CD8-positive, alpha-beta T cell (primary cell): ENCODE measurements at regions of chr1 and their contacts with region 1.

Region 1: DNA sequence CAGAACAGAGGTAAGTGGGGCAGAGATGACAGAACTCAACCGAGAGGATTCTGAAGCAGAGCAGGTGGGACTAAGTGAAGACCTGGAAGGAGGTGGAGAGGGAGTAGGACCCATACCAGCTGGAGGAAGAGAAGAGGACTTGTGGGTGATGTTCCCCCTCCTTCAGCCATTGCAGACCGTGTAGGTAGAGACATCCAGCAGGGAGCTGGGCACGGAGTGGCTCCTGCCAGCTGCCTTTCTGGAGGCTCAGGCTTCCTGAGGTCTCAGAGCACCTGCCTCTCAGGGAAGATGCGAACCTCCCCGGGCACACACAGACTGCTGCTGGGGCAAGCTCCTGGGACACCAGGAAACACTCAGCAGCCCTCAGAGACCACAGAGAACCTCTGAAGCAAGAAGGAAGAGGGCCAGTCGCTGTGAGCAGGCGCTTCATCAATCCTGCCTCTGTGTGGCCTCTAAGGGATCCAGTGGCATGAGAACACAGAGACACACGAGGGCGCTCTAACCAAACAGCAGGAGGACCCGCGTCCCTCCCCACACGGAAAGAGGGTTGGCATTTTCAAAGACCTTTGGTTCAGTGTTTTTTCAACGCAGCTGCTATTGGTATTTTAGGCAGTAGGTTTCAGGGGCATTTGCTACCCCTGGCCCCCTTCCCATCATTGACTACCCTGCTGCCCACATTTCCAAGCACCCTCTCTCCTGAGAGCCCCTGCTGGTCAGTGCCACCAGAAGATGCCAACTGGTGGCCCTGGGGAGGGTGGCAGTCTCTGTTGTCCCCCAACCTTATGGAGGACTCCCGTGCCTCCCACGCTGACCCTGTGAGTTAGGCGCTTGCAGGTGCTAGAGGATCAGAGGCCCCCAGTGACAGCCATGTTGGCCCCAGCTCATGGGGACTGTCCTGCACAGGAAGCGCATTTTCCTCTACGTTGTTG is 89.6 kb upstream of the EDN2 start:
- DNase-seq: peak; percentile 64 to 88 (median 81)
- ATAC-seq: peak; percentile 97
- H3K4me3 ChIP-seq: no peak overlapping the region
- H3K4me3 Mint-ChIP-seq: no peak overlapping the region
- H3K27ac ChIP-seq: no peak overlapping the region
- H3K27ac Mint-ChIP-seq: no peak overlapping the region
- H3K4me1 ChIP-seq: peaks cover 9% of the 10 kb centered on the region
- H3K4me1 Mint-ChIP-seq: peaks cover 8% of the 10 kb centered on the region
- H3K27me3 ChIP-seq: no peaks in the 10 kb centered on the region
- H3K27me3 Mint-ChIP-seq: no peaks in the 10 kb centered on the region
- CTCF ChIP-seq: peak; percentile 85

Region 2: GRCh38 chr1:41529621-41530395 is 44.2 kb before region 1 on chr1:
- CTCF ChIA-PET with region 1: no interaction called
- POLR2A ChIA-PET with region 1: no interaction called
- intact Hi-C with region 1: no loop called
- DNase-seq: no peak
- ATAC-seq: no peak
- H3K4me3 ChIP-seq: no peak overlapping the region
- H3K4me3 Mint-ChIP-seq: no peak overlapping the region
- H3K27ac ChIP-seq: no peak overlapping the region
- H3K27ac Mint-ChIP-seq: peak overlapping the region; percentile 71
- H3K4me1 ChIP-seq: no peaks in the 10 kb centered on the region
- H3K4me1 Mint-ChIP-seq: no peaks in the 10 kb centered on the region
- H3K27me3 ChIP-seq: no peaks in the 10 kb centered on the region
- H3K27me3 Mint-ChIP-seq: no peaks in the 10 kb centered on the region
- CTCF ChIP-seq: no peak

Region 3: DNA sequence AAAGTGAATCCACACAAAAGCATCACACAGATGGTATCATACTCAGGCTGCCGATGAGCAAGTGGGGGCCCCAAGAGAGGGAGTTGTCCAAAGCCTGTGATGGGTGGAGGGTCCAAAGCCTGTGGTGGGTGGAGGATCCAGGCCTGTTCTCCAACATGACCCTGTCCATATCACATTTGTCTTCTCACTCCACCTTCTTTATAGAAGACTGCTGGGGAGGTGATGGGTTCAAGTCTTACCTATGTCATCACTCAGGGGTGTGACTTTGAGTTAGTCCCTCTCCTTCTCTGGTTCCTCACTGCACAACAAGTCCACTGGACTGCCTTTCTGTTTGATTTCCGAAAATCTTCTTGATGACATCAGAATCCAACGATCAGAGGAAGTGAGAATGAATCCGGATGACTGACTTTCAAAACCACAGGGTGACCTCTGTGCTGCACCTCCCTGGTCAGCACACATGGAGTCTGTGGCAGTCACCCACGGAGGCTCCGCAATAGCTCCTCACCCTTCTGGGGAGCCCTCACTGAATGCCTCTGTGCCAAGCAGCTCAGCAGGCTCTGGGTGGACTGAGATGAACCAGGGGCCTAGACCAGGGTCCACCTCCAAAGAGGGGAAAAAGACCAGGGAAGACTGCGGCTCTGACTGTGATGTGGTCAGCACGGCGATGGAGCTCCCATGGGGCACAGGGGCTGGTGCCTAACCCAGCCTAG is 177.9 kb after region 1 on chr1:
- CTCF ChIA-PET with region 1: no interaction called
- POLR2A ChIA-PET with region 1: no interaction called
- intact Hi-C with region 1: loop called in 1 of 2 experiments (anchors 10 kb)
- DNase-seq: peak in 1 of 9 experiments; percentile 38
- ATAC-seq: no peak
- H3K4me3 ChIP-seq: no peak overlapping the region
- H3K4me3 Mint-ChIP-seq: no peak overlapping the region
- H3K27ac ChIP-seq: no peak overlapping the region
- H3K27ac Mint-ChIP-seq: peak overlapping the region; percentile 55
- H3K4me1 ChIP-seq: peaks cover 47% of the 10 kb centered on the region
- H3K4me1 Mint-ChIP-seq: peaks cover 53% of the 10 kb centered on the region
- H3K27me3 ChIP-seq: no peaks in the 10 kb centered on the region
- H3K27me3 Mint-ChIP-seq: no peaks in the 10 kb centered on the region
- CTCF ChIP-seq: no peak

Region 4: GRCh38 chr1:41812051-41812450 is 238.0 kb after region 1 on chr1:
- CTCF ChIA-PET with region 1: interaction called, 15 read pairs
- POLR2A ChIA-PET with region 1: no interaction called
- intact Hi-C with region 1: loop called (anchors 1 to 5 kb)
- DNase-seq: peak in 8 of 9 experiments; percentile 25 to 71 (median 42)
- ATAC-seq: peak; percentile 62
- H3K4me3 ChIP-seq: no peak overlapping the region
- H3K4me3 Mint-ChIP-seq: no peak overlapping the region
- H3K27ac ChIP-seq: no peak overlapping the region
- H3K27ac Mint-ChIP-seq: no peak overlapping the region
- H3K4me1 ChIP-seq: peaks cover 16% of the 10 kb centered on the region
- H3K4me1 Mint-ChIP-seq: peaks cover 28% of the 10 kb centered on the region
- H3K27me3 ChIP-seq: no peaks in the 10 kb centered on the region
- H3K27me3 Mint-ChIP-seq: no peaks in the 10 kb centered on the region
- CTCF ChIP-seq: peak; percentile 58

Region 5: DNA sequence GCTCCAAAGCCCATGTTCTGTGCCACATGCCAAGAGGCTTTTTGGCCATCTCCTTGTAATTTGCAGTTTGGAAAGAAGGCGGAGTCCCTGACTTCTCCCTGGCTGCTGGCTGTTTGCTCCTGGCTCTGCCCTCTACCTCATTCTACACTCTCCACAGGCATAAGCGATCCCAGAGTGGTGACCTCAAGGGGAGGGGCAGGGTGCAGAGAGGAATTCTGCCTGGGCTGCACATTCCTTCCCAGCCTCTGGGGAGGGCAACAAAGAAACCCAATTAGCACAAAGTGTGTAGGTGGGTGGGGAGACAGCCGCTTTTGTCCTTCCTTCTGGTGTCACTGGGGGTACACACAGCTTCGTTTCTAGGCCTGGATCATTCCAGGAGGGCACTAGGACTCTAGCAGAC is 249.4 kb after region 1 on chr1:
- CTCF ChIA-PET with region 1: no interaction called
- POLR2A ChIA-PET with region 1: no interaction called
- intact Hi-C with region 1: no loop called
- DNase-seq: no peak
- ATAC-seq: no peak
- H3K4me3 ChIP-seq: no peak overlapping the region
- H3K4me3 Mint-ChIP-seq: no peak overlapping the region
- H3K27ac ChIP-seq: no peak overlapping the region
- H3K27ac Mint-ChIP-seq: no peak overlapping the region
- H3K4me1 ChIP-seq: no peaks in the 10 kb centered on the region
- H3K4me1 Mint-ChIP-seq: no peaks in the 10 kb centered on the region
- H3K27me3 ChIP-seq: no peaks in the 10 kb centered on the region
- H3K27me3 Mint-ChIP-seq: no peaks in the 10 kb centered on the region
- CTCF ChIP-seq: no peak

Region 6: GRCh38 chr1:41891199-41891896 is 317.3 kb after region 1 on chr1:
- CTCF ChIA-PET with region 1: interaction called, 23 read pairs
- POLR2A ChIA-PET with region 1: no interaction called
- intact Hi-C with region 1: loop called (anchors 1 to 5 kb)
- DNase-seq: peak; percentile 22 to 89 (median 64)
- ATAC-seq: peak; percentile 98
- H3K4me3 ChIP-seq: peak overlapping the region; percentile 53 to 56
- H3K4me3 Mint-ChIP-seq: peak overlapping the region; percentile 81
- H3K27ac ChIP-seq: peak overlapping the region; percentile 58 to 74
- H3K27ac Mint-ChIP-seq: peak overlapping the region; percentile 93
- H3K4me1 ChIP-seq: peaks cover 28% of the 10 kb centered on the region
- H3K4me1 Mint-ChIP-seq: peaks cover 46% of the 10 kb centered on the region
- H3K27me3 ChIP-seq: no peaks in the 10 kb centered on the region
- H3K27me3 Mint-ChIP-seq: no peaks in the 10 kb centered on the region
- CTCF ChIP-seq: peak; percentile 60

Region 7: GRCh38 chr1:42173155-42173933 is 599.3 kb after region 1 on chr1:
- CTCF ChIA-PET with region 1: interaction called, 95 read pairs
- POLR2A ChIA-PET with region 1: no interaction called
- intact Hi-C with region 1: loop called (anchors 1 kb)
- DNase-seq: peak; percentile 38 to 84 (median 66)
- ATAC-seq: peak; percentile 92
- H3K4me3 ChIP-seq: no peak overlapping the region
- H3K4me3 Mint-ChIP-seq: no peak overlapping the region
- H3K27ac ChIP-seq: no peak overlapping the region
- H3K27ac Mint-ChIP-seq: no peak overlapping the region
- H3K4me1 ChIP-seq: peaks cover 4% of the 10 kb centered on the region
- H3K4me1 Mint-ChIP-seq: no peaks in the 10 kb centered on the region
- H3K27me3 ChIP-seq: no peaks in the 10 kb centered on the region
- H3K27me3 Mint-ChIP-seq: no peaks in the 10 kb centered on the region
- CTCF ChIP-seq: peak; percentile 97

Region 8: DNA sequence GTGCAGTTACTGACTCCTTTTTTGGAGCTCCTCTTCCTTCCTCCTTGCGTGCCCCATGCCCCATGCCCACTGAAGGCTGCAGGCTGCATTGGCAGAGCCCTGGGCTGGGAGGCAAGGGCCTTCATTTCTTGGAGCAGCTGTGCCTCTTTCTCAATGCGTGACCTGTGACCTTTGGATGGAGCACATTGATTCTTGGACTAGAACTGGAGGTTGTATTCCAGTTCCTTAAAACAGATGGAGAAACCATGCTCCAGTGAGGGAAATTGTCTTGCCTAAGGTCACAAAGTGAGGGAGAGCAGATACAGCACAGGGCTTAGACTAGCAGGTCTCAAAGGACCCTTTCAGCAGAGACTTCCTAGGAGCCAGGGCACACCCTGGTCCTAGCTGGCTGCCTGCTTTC is 1219.8 kb after region 1 on chr1:
- CTCF ChIA-PET with region 1: no interaction called
- POLR2A ChIA-PET with region 1: no interaction called
- intact Hi-C with region 1: no loop called
- DNase-seq: no peak
- ATAC-seq: no peak
- H3K4me3 ChIP-seq: no peak overlapping the region
- H3K4me3 Mint-ChIP-seq: no peak overlapping the region
- H3K27ac ChIP-seq: no peak overlapping the region
- H3K27ac Mint-ChIP-seq: no peak overlapping the region
- H3K4me1 ChIP-seq: no peaks in the 10 kb centered on the region
- H3K4me1 Mint-ChIP-seq: no peaks in the 10 kb centered on the region
- H3K27me3 ChIP-seq: no peaks in the 10 kb centered on the region
- H3K27me3 Mint-ChIP-seq: no peaks in the 10 kb centered on the region
- CTCF ChIP-seq: no peak